ENCODE measurements at regions of chr9 and their contacts with region 1.

Region 1: GRCh38 chr9:114518599-114519022 is 13.3 kb upstream of the WHRN start:
- DNase-seq: no peak
- ATAC-seq: no peak

Region 2: GRCh38 chr9:114487607-114488300 is 30.9 kb before region 1 on chr9:
- intact Hi-C with region 1: loop called (anchors 2 kb)
- DNase-seq: no peak
- ATAC-seq: peak; percentile 80